Activated T-helper 1 cell treated with anti-CD3 and anti-CD28 coated beads, Interleukin-12 subunit alpha, Interleukin-12 subunit beta, Interleukin-2, Interleukin-4 antibody, amounts not matched to agents 30 ng/mL and 10 ng/mL and 1 ng/mL, durations not matched to agents 14 hours and 24 hours and 36 hours (primary cell): ENCODE measurements at regions of chr14 and their contacts with region 1.

Region 1: DNA sequence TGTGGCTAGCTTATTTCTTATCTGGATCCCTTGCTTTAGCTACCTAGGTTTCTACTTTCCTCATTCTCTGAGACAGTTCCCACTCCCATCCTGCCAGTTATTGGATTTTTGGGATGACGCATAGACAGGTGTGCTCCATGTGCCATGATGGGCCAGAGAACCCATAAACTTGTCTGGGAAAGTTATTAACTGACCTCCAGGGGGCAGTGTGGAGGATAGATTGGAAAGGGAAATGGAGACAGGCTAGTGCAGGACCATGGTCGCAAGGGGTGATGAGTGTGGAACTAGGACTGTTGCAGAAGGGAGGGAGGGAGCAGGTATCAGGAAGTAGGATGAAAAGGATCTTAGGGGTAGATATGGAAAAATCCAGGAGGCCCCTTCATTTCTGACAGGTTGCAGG is 80.3 kb downstream of the ESRRB start:
- DNase-seq: no peak
- H3K4me3 Mint-ChIP-seq: no peak overlapping the region
- H3K27ac Mint-ChIP-seq: no peak overlapping the region
- H3K4me1 Mint-ChIP-seq: no peaks in the 10 kb centered on the region
- H3K27me3 Mint-ChIP-seq: peaks cover 11% of the 10 kb centered on the region

Region 2: DNA sequence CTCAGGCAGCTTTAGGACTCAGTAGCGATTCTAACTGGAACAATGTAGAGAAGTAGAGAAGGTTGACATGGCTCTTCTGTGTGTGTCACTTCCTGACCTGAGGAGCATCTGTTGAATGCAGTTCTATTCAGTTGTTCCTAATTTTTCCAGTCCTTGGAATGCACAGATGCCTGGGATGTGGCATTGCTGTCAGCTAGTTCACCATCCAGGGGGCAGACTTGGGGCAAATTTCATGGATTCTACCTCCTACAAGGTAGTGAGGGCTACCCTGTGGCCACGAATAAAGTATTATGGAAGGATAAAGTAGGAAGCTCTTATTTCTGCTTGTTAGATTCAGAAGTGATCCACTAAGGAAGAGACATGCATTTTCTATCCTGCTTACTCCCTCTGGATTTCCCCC is 378.9 kb before region 1 on chr14:
- intact Hi-C with region 1: loop called (anchors 5 kb)
- DNase-seq: no peak
- H3K4me3 Mint-ChIP-seq: no peak overlapping the region
- H3K27ac Mint-ChIP-seq: no peak overlapping the region
- H3K4me1 Mint-ChIP-seq: no peaks in the 10 kb centered on the region
- H3K27me3 Mint-ChIP-seq: peaks cover 2% of the 10 kb centered on the region

Region 3: DNA sequence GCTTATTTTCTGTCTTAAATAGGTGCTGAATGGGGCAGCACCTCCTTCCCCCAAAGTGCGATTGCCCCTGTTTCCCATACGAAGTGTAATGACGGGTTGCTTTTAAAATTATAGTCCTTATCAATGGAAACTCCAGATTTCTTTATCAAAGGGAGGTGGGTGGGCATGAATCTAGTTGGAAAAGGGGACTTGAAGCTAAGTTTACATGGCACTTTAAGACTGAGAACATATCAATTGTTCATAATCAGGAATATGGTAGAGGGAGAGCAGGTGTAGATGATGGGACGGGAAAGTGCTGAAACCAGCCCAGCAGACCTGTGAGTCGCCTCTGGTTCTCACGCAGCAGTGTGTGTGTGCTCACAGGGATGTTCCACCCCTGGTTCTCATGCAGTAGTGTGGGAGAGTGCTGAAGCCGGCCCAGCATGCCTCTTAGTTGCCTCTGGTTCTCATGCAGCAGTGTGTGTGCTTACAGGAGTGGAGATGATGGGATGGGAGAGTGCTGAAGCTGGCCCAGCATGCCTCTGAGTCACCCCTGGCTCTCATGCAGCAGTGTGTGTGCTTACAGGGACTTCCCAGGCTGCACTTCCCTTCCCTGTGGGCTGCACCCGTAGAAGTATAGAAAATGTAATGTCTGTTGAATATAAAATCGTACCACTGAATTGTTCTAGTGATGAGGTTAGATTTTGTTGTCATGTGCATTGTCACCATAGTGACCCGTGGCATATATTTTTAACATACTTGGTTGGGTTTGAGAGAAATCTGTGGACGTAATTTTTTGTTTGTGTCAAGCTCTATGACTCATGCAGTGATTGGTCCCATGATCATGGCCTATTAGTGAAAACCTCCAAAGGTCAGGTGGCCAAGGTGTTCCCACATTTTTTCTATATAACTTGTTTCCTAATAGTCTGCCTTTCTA is 252.9 kb before region 1 on chr14:
- intact Hi-C with region 1: no loop called
- DNase-seq: no peak
- H3K4me3 Mint-ChIP-seq: no peak overlapping the region
- H3K27ac Mint-ChIP-seq: no peak overlapping the region
- H3K4me1 Mint-ChIP-seq: peaks cover 9% of the 10 kb centered on the region
- H3K27me3 Mint-ChIP-seq: no peaks in the 10 kb centered on the region

Region 4: GRCh38 chr14:76396714-76397187 is 59.4 kb before region 1 on chr14:
- intact Hi-C with region 1: no loop called
- DNase-seq: no peak
- H3K4me3 Mint-ChIP-seq: no peak overlapping the region
- H3K27ac Mint-ChIP-seq: no peak overlapping the region
- H3K4me1 Mint-ChIP-seq: no peaks in the 10 kb centered on the region
- H3K27me3 Mint-ChIP-seq: peaks cover 3% of the 10 kb centered on the region